AG04450 (cell line): ENCODE measurements at regions of chr17 and their contacts with region 1.

Region 1: DNA sequence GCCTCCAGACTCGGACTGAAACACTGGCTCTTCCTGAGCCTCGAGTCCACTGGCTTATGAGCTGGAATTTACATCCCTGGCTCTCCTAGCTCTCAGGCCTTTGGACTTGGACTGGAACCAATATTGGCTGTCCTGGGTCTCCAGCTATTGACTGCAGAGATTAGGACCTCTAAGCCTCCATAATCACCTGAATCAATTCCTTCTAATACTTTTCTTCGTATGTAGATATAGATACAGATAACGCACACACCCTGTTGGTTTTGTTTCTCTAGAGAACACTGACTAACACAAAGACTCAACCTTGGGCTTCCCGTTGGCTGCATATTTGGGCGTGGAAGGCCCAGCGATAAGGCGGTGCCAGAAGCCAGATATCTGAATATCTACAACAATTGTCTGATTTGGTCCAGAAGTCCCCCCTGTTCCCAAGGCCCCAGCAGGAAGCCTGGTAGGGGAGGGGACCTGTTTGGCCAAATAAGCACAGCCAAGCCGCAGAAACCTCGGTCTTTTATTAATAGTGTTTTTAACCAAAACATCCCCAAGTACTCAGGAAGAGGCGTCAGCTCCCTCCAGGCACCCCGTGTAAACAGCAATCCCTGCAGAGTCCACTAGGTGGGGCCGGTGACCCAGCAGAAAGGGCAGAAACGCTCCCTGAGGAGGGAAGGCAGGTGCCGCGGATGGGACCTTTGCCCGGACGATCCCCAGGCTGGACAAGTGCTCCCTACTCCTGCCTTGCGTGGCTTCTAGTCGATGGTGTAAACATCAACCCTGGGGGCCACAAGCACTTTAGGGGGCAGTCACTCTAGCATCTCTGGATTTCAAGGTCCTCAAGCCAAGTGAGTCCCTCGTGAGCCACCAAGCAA is 57.0 kb downstream of the ABR start:
- DNase-seq: peak; percentile 23
- H3K4me3 ChIP-seq: no peak overlapping the region
- H3K27ac ChIP-seq: no peak overlapping the region
- H3K27me3 ChIP-seq: no peaks in the 10 kb centered on the region
- CTCF ChIP-seq: peak; percentile 92

Region 2: DNA sequence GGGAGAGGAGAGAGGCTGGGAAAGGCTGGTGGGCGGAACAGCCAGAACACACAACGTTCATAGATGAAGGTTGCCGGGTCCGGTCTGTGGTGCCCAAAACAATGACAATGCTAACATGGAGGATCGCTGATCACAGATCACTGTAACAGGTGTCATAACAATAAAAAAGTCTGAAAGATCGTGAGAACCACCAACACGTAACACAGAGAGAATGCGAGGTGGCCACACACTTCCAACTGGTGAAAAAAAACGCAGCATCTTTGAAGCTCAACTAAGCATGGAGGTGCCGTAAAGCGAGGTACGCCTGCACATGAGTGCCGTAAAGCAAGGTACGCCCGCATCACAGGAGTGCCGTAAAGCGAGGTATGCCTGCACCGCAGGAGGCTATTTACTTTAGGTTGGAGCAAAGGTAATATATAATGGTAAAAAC is 14.7 kb after region 1 on chr17:
- CTCF ChIA-PET with region 1: interaction called, 11 read pairs
- POLR2A ChIA-PET with region 1: interaction called, 3 read pairs
- DNase-seq: no peak
- H3K4me3 ChIP-seq: no peak overlapping the region
- H3K27ac ChIP-seq: no peak overlapping the region
- H3K27me3 ChIP-seq: no peaks in the 10 kb centered on the region
- CTCF ChIP-seq: no peak

Region 3: DNA sequence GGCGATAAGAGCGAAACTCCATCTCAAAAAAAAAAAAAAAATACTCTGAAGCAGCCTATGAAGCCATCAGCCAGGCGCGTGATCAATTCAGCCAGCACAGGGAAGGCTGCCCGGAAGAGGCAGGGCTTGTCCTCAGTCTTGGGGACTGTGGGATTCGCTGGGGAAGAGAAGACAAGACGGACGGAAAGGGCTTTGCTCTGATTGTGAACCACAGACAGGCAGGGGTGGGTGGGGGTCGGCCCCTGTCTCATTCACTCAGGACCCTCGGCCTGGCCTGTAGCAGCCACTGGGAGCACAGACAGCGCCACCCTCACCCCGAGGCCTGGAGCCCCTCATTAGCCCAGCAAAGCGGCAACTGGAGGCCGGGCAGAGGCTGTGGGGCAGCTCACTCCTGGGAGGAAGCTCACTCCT is 19.8 kb after region 1 on chr17:
- CTCF ChIA-PET with region 1: interaction called, 24 read pairs
- POLR2A ChIA-PET with region 1: interaction called, 3 read pairs
- DNase-seq: no peak
- H3K4me3 ChIP-seq: no peak overlapping the region
- H3K27ac ChIP-seq: no peak overlapping the region
- H3K27me3 ChIP-seq: no peaks in the 10 kb centered on the region
- CTCF ChIP-seq: no peak

Region 4: DNA sequence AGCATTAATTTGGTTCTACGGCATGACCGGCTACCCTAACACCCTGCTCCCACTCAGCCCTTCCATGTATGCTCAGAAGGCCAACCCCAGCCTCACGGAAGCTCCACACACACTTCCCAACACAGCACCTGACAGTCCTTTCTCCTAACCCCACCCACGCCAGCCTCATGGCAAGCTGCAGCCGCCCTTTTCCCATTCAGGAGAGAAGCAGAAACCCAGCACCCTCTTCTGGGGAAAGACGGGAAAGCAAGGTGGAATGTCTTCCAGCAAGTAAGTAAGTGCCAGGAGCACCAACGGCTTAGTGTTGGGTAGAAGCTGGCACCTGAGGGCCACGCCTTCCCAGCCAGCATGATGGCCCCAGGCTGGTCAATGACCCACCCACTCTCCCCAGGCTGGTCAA is 24.9 kb after region 1 on chr17:
- CTCF ChIA-PET with region 1: interaction called, 24 read pairs
- POLR2A ChIA-PET with region 1: no interaction called
- DNase-seq: no peak
- H3K4me3 ChIP-seq: no peak overlapping the region
- H3K27ac ChIP-seq: no peak overlapping the region
- H3K27me3 ChIP-seq: no peaks in the 10 kb centered on the region
- CTCF ChIP-seq: peak; percentile 53

Region 5: GRCh38 chr17:1186923-1187771 is 64.4 kb after region 1 on chr17:
- CTCF ChIA-PET with region 1: interaction called, 111 read pairs
- POLR2A ChIA-PET with region 1: no interaction called
- DNase-seq: peak; percentile 79
- H3K4me3 ChIP-seq: peak overlapping the region; percentile 27
- H3K27ac ChIP-seq: no peak overlapping the region
- H3K27me3 ChIP-seq: peaks cover 17% of the 10 kb centered on the region
- CTCF ChIP-seq: peak; percentile 100